ENCODE measurements at regions of chr13 and their contacts with region 1.

Region 1: GRCh38 chr13:40589285-40590109 is 76.9 kb downstream of the FOXO1 start:
- DNase-seq: peak in 2 of 10 donors; percentile 25 to 41
- H3K4me3 ChIP-seq: peak overlapping the region in 1 of 59 donors; percentile 4
- H3K27ac ChIP-seq: peak overlapping the region in 47 of 59 donors; percentile 5 to 80 (median 55)
- H3K27me3 ChIP-seq: no peaks in the 10 kb centered on the region
- CTCF ChIP-seq: no peak

Region 2: DNA sequence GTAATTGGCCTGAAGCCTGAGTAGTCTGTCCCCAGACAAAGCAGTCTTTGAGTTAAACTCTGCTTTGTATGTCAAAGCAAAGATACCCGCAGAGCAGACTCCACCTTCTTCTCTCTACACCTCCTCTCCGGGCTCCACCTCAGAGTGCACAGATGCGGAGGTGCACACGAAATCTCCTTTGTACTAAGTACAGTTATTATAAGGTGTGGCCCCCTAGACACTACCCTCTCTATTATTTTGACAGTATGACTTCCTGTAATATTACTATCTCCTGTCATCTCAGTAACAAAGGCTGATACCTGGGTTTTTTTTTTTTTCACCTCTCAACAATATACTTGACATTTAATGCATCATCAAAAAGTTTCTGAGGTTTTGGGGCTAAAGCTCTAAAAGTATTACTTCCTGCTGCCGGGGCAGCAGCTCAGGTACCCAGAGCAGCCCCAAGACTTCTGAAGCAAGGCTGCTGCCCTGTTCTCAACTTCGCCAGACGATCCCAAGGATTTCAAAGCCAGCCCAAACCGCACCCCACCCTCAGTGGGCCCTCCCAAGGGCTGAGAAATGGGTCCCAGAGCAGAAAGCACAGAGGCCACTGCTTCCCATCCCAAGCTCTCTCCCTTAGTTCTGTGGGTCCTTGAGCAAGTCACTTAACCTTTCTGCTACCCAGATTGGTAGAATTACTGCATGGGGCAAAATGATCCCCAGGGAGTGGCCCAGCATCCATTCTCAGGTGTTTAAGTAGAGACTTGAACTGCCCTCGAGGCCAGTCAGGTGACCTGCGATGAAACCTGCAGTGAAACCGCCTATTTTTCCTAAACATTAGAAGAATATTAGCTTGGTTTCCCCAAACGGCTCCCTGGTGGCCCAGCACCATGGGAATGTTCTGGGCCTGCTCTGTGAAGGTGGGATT is 103.6 kb before region 1 on chr13:
- intact Hi-C with region 1: loop called in 1 of 2 experiments (anchors 5 kb)
- DNase-seq: no peak
- H3K4me3 ChIP-seq: no peak overlapping the region
- H3K27ac ChIP-seq: no peak overlapping the region
- H3K27me3 ChIP-seq: no peaks in the 10 kb centered on the region
- CTCF ChIP-seq: no peak

Region 3: DNA sequence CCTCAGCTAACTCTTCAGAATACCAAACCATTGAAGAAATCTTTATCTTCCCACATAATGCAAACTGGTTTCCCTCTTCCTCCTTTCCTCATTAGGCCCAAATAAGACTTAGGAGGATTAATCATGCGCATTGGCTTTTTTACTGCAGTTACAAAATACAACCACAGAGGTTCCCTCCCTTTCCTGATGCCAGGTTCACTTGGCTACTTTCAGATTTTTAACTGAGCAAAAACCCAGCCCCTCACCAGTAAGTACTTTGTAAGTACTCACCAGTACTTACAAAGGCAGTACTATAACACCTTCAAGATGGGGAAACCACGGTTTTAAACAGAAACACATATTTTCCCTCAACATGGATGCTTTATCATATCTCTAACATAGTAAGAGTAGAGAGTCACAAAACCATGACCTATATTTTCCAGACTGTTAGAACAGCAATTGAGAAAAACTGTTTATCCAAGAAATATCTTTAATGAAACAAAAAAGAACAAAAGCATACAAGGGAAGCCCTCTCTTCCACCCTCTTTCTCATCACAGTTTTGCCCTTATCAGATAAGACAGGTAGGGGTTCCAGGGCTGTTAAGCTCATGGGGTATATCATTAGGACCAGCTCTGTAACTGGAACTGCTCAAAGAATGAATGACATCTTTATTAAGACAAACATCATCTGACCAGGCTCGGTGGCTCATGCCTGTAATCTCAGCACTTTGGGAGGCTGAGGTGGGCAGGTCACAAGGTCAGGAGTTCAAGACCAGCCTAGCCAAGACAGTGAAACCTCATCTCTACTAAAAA is 64.2 kb after region 1 on chr13:
- intact Hi-C with region 1: loop called in 1 of 2 experiments (anchors 10 kb)
- DNase-seq: no peak
- H3K4me3 ChIP-seq: no peak overlapping the region
- H3K27ac ChIP-seq: no peak overlapping the region
- H3K27me3 ChIP-seq: no peaks in the 10 kb centered on the region
- CTCF ChIP-seq: no peak

Region 4: GRCh38 chr13:41029629-41030028 is 440.1 kb after region 1 on chr13:
- intact Hi-C with region 1: no loop called
- DNase-seq: no peak
- H3K4me3 ChIP-seq: no peak overlapping the region
- H3K27ac ChIP-seq: no peak overlapping the region
- H3K27me3 ChIP-seq: no peaks in the 10 kb centered on the region
- CTCF ChIP-seq: no peak

Measured in dorsolateral prefrontal cortex (tissue), 120 donors.